Natural killer cell (primary cell): ENCODE measurements at regions of chr2 and their contacts with region 1.

Region 1: GRCh38 chr2:203814661-203815540 is 52.7 kb upstream of the CTLA4 start:
- DNase-seq: peak; percentile 25 to 85
- ATAC-seq: peak; percentile 72 to 87 (median 82)
- H3K4me3 ChIP-seq: no peak overlapping the region
- H3K4me3 Mint-ChIP-seq: no peak overlapping the region
- H3K27ac ChIP-seq: no peak overlapping the region
- H3K27ac Mint-ChIP-seq: no peak overlapping the region
- H3K4me1 ChIP-seq: peaks cover 19% of the 10 kb centered on the region
- H3K4me1 Mint-ChIP-seq: peaks cover 23 to 33% of the 10 kb centered on the region in 2 donors
- H3K27me3 ChIP-seq: no peaks in the 10 kb centered on the region
- H3K27me3 Mint-ChIP-seq: peaks cover 10 to 23% of the 10 kb centered on the region in 2 donors
- CTCF ChIP-seq: peak; percentile 85

Region 2: DNA sequence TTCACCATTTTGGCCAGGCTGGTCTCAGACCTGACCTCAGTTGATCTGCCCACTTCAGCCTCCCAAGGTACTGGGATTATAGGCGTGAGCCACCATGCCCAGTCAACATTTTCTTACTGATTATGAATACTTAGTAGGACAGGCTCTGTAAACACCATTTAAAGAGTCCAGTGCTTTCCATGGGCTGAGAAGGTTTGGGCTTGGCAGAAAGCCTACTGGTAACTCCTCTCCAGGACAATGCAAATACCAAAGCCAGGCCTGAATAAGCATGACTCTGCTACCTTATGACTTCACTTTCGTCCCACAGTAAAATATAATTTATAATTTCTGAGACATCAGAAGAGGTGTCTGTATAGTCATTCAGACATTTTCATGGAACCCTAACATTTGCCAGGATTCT is 1240.4 kb before region 1 on chr2:
- intact Hi-C with region 1: loop called (anchors 5 kb)
- DNase-seq: no peak
- ATAC-seq: no peak
- H3K4me3 ChIP-seq: no peak overlapping the region
- H3K4me3 Mint-ChIP-seq: no peak overlapping the region
- H3K27ac ChIP-seq: no peak overlapping the region
- H3K27ac Mint-ChIP-seq: no peak overlapping the region
- H3K4me1 ChIP-seq: no peaks in the 10 kb centered on the region
- H3K4me1 Mint-ChIP-seq: no peaks in the 10 kb centered on the region
- H3K27me3 ChIP-seq: no peaks in the 10 kb centered on the region
- H3K27me3 Mint-ChIP-seq: peaks cover 0 to 3% of the 10 kb centered on the region in 2 donors
- CTCF ChIP-seq: no peak

Region 3: DNA sequence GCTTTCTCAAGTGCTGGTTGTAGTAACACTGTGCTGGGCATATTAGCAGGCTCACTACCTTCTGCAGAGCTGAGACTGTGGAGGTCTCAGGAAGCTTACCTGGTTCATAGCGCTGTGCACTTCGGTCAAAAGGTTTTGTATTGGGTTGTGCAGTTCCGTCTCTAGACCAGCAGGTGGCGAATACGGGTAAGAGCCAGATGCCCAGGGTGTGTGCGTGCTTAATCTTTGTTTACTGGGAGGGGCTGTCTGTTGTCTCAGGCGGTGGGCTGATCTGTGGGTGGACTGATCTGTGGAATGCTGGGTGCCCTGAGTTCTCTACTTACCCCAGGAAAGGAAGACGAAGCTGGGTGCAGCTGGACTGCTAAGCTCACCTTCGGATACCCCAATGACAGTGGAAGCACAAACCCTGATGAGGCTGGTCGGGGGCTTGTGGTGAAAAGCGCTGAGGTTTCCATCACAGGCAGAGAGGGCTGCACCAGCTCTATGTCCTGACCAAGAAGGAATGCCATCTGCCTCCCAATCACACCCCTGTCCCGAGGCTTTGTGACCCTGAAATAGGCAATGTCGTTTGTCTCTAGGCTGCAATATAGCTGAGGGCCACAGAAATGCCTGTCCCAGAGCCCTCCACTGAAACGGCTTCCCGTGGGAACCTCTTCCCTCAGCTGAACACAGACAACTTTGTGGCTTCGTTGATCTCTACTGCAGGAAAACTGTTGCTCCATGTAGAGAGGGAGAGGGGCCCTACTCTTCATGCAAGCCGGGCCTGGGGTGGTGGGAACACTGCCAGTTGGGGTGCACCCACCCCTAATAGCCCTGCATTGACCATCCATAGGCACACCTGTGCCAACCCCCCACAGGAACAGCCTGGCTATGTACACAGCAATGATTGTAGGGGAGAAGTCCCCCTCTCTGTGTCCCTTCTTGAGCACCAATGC is 1226.0 kb before region 1 on chr2:
- intact Hi-C with region 1: loop called (anchors 1 kb)
- DNase-seq: peak; percentile 52 to 88
- ATAC-seq: peak; percentile 88 to 100 (median 99)
- H3K4me3 ChIP-seq: no peak overlapping the region
- H3K4me3 Mint-ChIP-seq: no peak overlapping the region
- H3K27ac ChIP-seq: no peak overlapping the region
- H3K27ac Mint-ChIP-seq: no peak overlapping the region
- H3K4me1 ChIP-seq: peaks cover 6% of the 10 kb centered on the region
- H3K4me1 Mint-ChIP-seq: peaks cover 7% of the 10 kb centered on the region in 2 donors
- H3K27me3 ChIP-seq: no peaks in the 10 kb centered on the region
- H3K27me3 Mint-ChIP-seq: peaks cover 6 to 8% of the 10 kb centered on the region in 2 donors
- CTCF ChIP-seq: peak; percentile 78

Region 4: DNA sequence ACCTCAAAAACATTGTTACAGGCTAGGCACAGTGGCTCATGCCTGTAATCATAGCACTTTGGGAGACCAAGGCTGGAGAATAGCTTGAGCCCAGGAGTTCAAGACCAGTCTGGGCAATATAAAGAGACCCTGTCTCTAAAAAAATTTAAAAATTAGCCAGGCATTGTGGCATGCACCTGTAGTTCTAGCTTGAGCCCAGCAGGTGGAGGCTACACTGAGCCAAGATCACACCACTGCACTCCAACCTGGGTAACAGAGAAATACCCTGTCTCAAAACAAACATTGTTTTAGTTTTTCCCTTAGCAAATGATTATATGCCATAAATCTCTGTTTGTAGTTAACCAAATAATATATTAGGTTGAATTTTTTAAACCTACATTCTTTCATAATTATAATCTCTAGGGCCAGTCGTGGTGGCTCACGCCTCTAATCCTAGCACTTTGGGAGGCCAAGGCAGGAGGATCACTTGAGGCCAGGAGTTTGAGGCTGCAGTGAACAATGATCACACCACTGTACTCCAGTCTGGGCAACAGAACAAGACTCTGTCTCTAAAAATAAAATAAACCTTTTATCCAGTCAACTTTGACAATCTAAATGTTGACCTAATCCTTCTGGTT is 589.4 kb before region 1 on chr2:
- intact Hi-C with region 1: loop called (anchors 1 kb)
- DNase-seq: peak in 1 of 2 donors; percentile 72
- ATAC-seq: peak; percentile 78 to 93 (median 86)
- H3K4me3 ChIP-seq: no peak overlapping the region
- H3K4me3 Mint-ChIP-seq: no peak overlapping the region
- H3K27ac ChIP-seq: no peak overlapping the region
- H3K27ac Mint-ChIP-seq: no peak overlapping the region
- H3K4me1 ChIP-seq: no peaks in the 10 kb centered on the region
- H3K4me1 Mint-ChIP-seq: no peaks in the 10 kb centered on the region
- H3K27me3 ChIP-seq: no peaks in the 10 kb centered on the region
- H3K27me3 Mint-ChIP-seq: no peaks in the 10 kb centered on the region
- CTCF ChIP-seq: peak; percentile 72

Region 5: DNA sequence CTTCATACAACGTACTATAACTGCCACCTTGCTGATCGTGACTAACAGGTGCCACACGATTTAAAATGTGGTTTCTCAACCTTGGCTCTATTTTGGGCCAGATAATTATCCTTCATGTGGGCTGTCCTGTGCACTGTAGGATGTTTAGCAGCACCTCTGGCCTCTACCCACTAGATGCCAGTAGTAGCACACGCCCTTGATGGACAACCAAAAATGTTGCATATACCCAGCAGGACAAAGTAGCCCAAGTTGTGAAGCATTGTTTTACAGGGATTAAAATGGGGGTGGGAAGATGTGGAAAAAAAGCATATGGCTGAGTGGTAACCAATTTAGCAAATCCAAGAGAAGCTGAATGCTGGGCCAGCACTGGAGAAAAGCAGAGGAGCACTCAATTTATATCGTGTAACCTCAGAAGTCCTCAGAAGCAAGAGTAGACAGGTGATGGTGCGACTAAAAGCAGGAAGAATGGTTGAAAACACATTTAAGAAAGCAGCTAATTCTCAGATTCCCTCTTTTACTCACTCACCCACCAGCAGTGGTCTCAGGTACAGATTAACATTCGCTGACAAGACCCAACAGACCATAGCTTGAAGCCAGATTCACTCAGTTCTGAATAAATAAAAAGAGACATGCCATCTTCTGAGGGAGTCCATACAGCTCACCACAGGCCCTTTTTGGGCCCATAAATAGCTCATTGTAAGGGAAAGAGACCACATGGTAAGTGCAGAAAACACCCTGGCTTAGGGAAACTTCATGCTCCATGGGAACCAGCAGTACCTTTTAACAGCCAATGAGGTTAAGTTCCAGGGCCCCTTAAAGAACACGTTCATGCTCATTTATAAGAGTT is 330.4 kb before region 1 on chr2:
- intact Hi-C with region 1: loop called (anchors 1 kb)
- DNase-seq: peak in 1 of 2 donors; percentile 81
- ATAC-seq: peak in 2 of 3 donors; percentile 70 to 91
- H3K4me3 ChIP-seq: no peak overlapping the region
- H3K4me3 Mint-ChIP-seq: no peak overlapping the region
- H3K27ac ChIP-seq: no peak overlapping the region
- H3K27ac Mint-ChIP-seq: no peak overlapping the region
- H3K4me1 ChIP-seq: no peaks in the 10 kb centered on the region
- H3K4me1 Mint-ChIP-seq: no peaks in the 10 kb centered on the region
- H3K27me3 ChIP-seq: no peaks in the 10 kb centered on the region
- H3K27me3 Mint-ChIP-seq: no peaks in the 10 kb centered on the region
- CTCF ChIP-seq: peak; percentile 41

Region 6: GRCh38 chr2:203535078-203535783 is 279.7 kb before region 1 on chr2 and contains the start of gene RAPH1:
- intact Hi-C with region 1: no loop called
- DNase-seq: peak; percentile 33 to 69
- ATAC-seq: peak; percentile 57 to 69 (median 68)
- H3K4me3 ChIP-seq: peak within 1 kb of the TSS; percentile 34
- H3K4me3 Mint-ChIP-seq: peak within 1 kb of the TSS; percentile 93
- H3K27ac ChIP-seq: no peak within 1 kb of the TSS
- H3K27ac Mint-ChIP-seq: peak within 1 kb of the TSS in 1 of 2 donors; percentile 63
- H3K4me1 ChIP-seq: peaks cover 17% of the 10 kb centered on the region
- H3K4me1 Mint-ChIP-seq: peaks cover 23% of the 10 kb centered on the region in 2 donors
- H3K27me3 ChIP-seq: peaks cover 46% of the 10 kb centered on the region
- H3K27me3 Mint-ChIP-seq: peaks cover 39 to 49% of the 10 kb centered on the region in 2 donors
- CTCF ChIP-seq: no peak
- total RNA-seq, gene RAPH1: 0.34 to 3.6 (median 1.5) TPM

Region 7: GRCh38 chr2:203706403-203706802 is 108.5 kb before region 1 on chr2 and contains the start of gene CD28:
- intact Hi-C with region 1: loop called (anchors 5 kb)
- DNase-seq: peak; percentile 82 to 95
- ATAC-seq: peak; percentile 94 to 100 (median 95)
- H3K4me3 ChIP-seq: peak within 1 kb of the TSS; percentile 36
- H3K4me3 Mint-ChIP-seq: peak within 1 kb of the TSS; percentile 94
- H3K27ac ChIP-seq: peak within 1 kb of the TSS; percentile 61
- H3K27ac Mint-ChIP-seq: peak within 1 kb of the TSS; percentile 91 to 93
- H3K4me1 ChIP-seq: peaks cover 24% of the 10 kb centered on the region
- H3K4me1 Mint-ChIP-seq: peaks cover 30% of the 10 kb centered on the region in 2 donors
- H3K27me3 ChIP-seq: no peaks in the 10 kb centered on the region
- H3K27me3 Mint-ChIP-seq: peaks cover 0 to 8% of the 10 kb centered on the region in 2 donors
- CTCF ChIP-seq: no peak
- total RNA-seq, gene CD28: 0.54 to 3.5 (median 3.3) TPM

Region 8: GRCh38 chr2:203782262-203782976 is 32.5 kb before region 1 on chr2:
- intact Hi-C with region 1: loop called (anchors 1 kb)
- DNase-seq: peak in 1 of 2 donors; percentile 87
- ATAC-seq: peak; percentile 55 to 86 (median 77)
- H3K4me3 ChIP-seq: no peak overlapping the region
- H3K4me3 Mint-ChIP-seq: no peak overlapping the region
- H3K27ac ChIP-seq: no peak overlapping the region
- H3K27ac Mint-ChIP-seq: peak overlapping the region in 1 of 2 donors; percentile 76
- H3K4me1 ChIP-seq: peaks cover 21% of the 10 kb centered on the region
- H3K4me1 Mint-ChIP-seq: peaks cover 26 to 27% of the 10 kb centered on the region in 2 donors
- H3K27me3 ChIP-seq: no peaks in the 10 kb centered on the region
- H3K27me3 Mint-ChIP-seq: no peaks in the 10 kb centered on the region
- CTCF ChIP-seq: peak; percentile 76

Region 9: DNA sequence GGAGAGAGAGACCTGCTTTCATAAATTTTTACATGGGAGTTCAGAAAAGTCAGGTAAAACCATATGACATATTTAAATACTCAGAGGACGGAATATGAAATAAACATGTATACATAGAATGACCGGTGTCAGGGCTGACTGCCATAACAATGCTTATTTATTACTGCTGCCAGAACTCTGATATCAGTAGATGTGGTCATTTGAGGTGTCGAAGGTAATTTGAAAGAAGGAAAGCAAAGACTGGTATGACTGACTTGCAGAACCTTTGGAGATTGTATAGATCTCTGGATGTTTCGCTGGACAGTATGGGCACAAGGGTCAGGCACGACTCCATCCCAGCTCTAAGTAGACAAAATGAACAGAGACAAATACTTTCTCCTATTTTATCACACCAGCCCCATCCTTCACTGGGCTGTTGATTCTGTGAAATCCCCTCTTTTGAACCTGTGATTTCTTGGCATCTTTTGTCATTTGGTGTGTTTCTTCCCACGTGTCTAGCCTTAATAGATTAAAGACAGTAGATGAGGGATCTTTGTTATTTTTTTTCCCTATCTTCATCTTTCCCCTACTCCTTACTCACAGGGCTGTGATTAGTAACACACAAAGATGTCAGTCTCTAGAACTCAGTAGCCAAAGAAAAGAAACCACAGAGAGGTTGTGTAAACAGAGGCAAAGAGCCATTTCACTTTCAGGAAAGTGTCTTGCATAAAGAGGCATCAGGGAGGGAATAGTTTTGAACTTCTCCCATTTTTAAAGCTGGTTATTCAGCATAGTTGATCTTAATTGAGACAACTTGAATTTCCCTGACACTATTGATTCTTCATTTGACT is 183.3 kb after region 1 on chr2:
- intact Hi-C with region 1: no loop called
- DNase-seq: peak in 1 of 2 donors; percentile 50
- ATAC-seq: no peak
- H3K4me3 ChIP-seq: no peak overlapping the region
- H3K4me3 Mint-ChIP-seq: no peak overlapping the region
- H3K27ac ChIP-seq: no peak overlapping the region
- H3K27ac Mint-ChIP-seq: no peak overlapping the region
- H3K4me1 ChIP-seq: peaks cover 12% of the 10 kb centered on the region
- H3K4me1 Mint-ChIP-seq: peaks cover 33% of the 10 kb centered on the region in 2 donors
- H3K27me3 ChIP-seq: no peaks in the 10 kb centered on the region
- H3K27me3 Mint-ChIP-seq: no peaks in the 10 kb centered on the region
- CTCF ChIP-seq: no peak